MCF 10A (cell line): ENCODE measurements at regions of chr3 and their contacts with region 1.

Region 1: GRCh38 chr3:52001443-52001974 is 5.8 kb upstream of the RPL29 start:
- DNase-seq: peak; percentile 77
- H3K4me3 Mint-ChIP-seq: no peak overlapping the region
- H3K27ac Mint-ChIP-seq: no peak overlapping the region
- H3K4me1 Mint-ChIP-seq: peaks cover 8% of the 10 kb centered on the region
- H3K27me3 Mint-ChIP-seq: no peaks in the 10 kb centered on the region
- CTCF ChIP-seq: peak; percentile 97

Region 2: DNA sequence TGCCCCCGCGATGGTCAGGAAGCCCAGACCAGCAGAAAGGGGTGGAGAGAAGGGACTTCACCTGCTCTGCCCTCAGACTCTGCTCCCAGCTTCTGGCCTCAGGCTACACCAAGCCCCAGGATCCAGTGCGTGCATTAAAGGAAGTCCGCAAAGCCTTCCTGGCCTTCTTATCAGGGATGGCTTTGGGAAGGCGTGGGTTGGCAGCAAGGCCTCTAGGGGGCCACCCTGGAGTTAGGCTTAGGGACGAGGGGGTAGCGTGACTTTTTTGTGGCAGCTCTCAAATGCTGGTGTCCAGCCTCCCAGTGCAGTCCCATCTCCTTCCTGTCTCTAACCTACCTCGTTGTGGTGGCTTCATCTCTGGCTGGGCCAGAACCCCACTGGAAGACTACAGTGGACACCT is 13.1 kb after region 1 on chr3:
- CTCF ChIA-PET with region 1: interaction called, 27 read pairs
- POLR2A ChIA-PET with region 1: no interaction called
- intact Hi-C with region 1: no loop called
- DNase-seq: no peak
- H3K4me3 Mint-ChIP-seq: no peak overlapping the region
- H3K27ac Mint-ChIP-seq: no peak overlapping the region
- H3K4me1 Mint-ChIP-seq: no peaks in the 10 kb centered on the region
- H3K27me3 Mint-ChIP-seq: no peaks in the 10 kb centered on the region
- CTCF ChIP-seq: no peak

Region 3: DNA sequence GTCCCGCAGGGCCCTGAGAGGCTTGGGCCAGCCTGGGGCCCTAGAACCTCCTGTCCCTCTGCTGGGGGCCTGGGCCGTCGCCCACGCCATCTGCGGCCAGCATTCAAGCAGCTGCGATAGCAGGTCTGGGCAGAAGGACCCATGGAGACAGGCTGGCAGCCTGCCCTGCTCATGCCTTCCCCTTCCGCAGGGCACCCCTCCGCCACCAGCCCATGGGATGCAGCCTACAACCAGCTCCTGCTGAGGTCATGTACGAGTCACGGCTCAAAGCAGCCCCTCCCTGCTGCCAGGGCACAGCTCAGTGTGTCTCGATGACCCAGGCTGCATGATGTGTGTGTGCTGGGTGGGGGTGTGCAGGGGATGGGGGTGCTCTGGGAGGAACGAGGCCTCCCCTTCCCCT is 27.1 kb after region 1 on chr3:
- CTCF ChIA-PET with region 1: interaction called, 14 read pairs
- POLR2A ChIA-PET with region 1: no interaction called
- intact Hi-C with region 1: no loop called
- DNase-seq: no peak
- H3K4me3 Mint-ChIP-seq: no peak overlapping the region
- H3K27ac Mint-ChIP-seq: no peak overlapping the region
- H3K4me1 Mint-ChIP-seq: peaks cover 21% of the 10 kb centered on the region
- H3K27me3 Mint-ChIP-seq: no peaks in the 10 kb centered on the region
- CTCF ChIP-seq: no peak

Region 4: GRCh38 chr3:52123106-52123725 is 121.7 kb after region 1 on chr3:
- CTCF ChIA-PET with region 1: interaction called, 71 read pairs
- POLR2A ChIA-PET with region 1: interaction called, 3 read pairs
- intact Hi-C with region 1: loop called (anchors 1 kb)
- DNase-seq: peak; percentile 75
- H3K4me3 Mint-ChIP-seq: no peak overlapping the region
- H3K27ac Mint-ChIP-seq: peak overlapping the region; percentile 49
- H3K4me1 Mint-ChIP-seq: peaks cover 18% of the 10 kb centered on the region
- H3K27me3 Mint-ChIP-seq: no peaks in the 10 kb centered on the region
- CTCF ChIP-seq: peak; percentile 94

Region 5: DNA sequence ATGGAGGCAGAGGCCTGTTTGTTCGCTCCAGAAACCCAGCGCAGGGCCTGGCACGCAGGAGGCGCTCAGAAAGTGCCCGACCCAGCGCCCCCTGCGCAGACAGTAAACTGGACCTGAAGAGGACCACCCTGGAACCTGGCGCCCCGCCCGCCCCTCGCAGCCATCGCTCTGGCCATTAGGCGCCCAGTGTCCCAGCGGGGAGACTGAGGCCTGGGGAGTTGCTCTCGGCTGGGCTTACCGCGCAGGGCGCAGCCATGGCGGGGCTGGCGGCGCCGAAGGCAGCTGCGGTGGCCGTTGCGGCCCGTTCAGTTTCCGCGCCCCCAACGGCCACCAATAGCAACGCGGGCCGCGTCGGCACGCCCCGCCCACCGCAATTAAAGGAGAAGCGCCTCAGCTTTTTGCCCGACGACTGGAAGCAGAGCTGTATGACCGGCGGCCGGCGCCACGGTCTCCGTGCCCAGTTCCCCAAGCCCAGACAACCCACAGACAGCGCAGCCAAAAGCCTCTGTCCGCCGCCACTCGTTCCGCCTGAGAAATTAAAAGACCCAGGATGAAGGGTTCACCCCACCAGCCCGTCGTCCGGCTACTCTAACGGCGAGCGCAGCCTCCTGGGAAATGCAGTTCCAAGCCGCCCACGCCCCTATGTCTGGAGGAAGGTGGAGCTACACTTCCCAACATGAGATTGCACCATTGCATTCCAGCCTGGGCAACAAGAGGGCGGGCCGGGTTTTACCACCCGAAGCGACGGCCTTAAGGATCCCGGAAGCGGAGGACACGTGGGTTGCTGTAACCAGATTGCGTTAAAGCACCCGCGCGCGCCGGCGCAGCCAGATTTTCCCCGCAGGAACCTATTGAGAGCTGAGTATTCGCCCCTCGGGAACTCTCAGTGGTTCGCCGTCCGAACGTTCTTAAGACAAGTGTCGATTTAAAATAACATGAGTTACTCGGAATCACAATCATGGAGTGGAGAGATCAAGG is 152.9 kb after region 1 on chr3 and contains the start of gene POC1A:
- CTCF ChIA-PET with region 1: interaction called, 230 read pairs
- POLR2A ChIA-PET with region 1: interaction called, 3 read pairs
- intact Hi-C with region 1: no loop called
- DNase-seq: peak; percentile 99
- H3K4me3 Mint-ChIP-seq: peak within 1 kb of the TSS; percentile 93
- H3K27ac Mint-ChIP-seq: peak within 1 kb of the TSS; percentile 96
- H3K4me1 Mint-ChIP-seq: peaks cover 10% of the 10 kb centered on the region
- H3K27me3 Mint-ChIP-seq: no peaks in the 10 kb centered on the region
- CTCF ChIP-seq: no peak
- total RNA-seq, gene POC1A: 7.5 and 9.8 TPM in 2 replicates

Region 6: DNA sequence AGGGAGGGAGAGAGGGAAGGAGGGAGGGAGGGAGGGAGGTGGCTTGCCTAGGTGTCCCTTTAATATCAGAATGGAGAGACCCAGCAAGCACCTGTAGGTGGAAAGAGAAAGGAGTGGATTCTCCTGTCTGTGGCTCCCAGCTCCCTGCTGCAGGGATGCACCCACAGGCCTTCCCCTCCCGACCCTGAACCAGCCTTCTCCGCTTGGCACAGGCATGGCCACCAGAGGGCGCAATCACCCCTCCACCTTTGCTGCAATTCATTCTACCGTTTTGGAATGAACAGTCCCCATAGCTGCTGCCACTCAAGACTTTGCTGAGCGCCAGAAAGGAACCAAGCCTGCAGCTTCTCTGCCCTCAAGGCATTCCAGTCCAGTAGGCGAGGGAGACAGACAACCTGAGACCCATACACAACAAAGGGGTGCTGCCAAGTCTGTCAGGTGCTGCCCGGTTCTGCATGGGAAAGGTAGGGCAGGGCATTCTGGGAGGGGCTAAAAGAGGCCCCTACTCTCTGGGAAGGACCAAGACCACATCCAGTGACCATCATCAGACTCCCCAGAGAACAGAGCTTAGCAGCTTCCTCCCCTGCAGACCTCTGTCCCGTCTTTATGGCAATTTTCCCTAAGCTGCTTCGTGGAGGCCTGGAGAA is 219.0 kb after region 1 on chr3:
- CTCF ChIA-PET with region 1: interaction called, 3 read pairs
- POLR2A ChIA-PET with region 1: no interaction called
- intact Hi-C with region 1: loop called (anchors 10 kb)
- DNase-seq: peak; percentile 82
- H3K4me3 Mint-ChIP-seq: no peak overlapping the region
- H3K27ac Mint-ChIP-seq: no peak overlapping the region
- H3K4me1 Mint-ChIP-seq: peaks cover 15% of the 10 kb centered on the region
- H3K27me3 Mint-ChIP-seq: no peaks in the 10 kb centered on the region
- CTCF ChIP-seq: peak; percentile 81

Region 7: DNA sequence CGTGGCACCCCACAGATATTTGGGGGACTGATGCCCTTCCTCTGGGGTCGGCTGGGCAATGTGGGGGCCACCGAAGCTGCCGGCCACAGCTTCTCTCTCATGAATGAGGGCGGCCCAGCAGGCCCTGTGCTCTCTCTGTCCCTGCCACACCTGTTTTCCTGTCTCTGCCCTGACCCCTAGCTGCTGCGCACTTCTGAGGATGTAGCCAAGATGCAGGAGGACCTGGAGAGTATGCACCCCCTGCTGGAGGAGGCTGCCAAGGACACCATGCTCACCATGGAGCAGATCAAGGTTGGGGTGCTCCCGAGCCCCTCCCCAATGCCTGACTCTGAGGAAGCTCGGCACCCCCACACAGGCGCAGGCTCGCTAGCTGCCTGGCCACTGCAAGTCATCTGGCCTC is 383.6 kb after region 1 on chr3:
- CTCF ChIA-PET with region 1: no interaction called
- POLR2A ChIA-PET with region 1: no interaction called
- intact Hi-C with region 1: no loop called
- DNase-seq: peak; percentile 56
- H3K4me3 Mint-ChIP-seq: no peak overlapping the region
- H3K27ac Mint-ChIP-seq: no peak overlapping the region
- H3K4me1 Mint-ChIP-seq: no peaks in the 10 kb centered on the region
- H3K27me3 Mint-ChIP-seq: no peaks in the 10 kb centered on the region
- CTCF ChIP-seq: peak; percentile 59